Naive thymus-derived CD4-positive, alpha-beta T cell (primary cell): ENCODE measurements at regions of chr2 and their contacts with region 1.

Region 1: DNA sequence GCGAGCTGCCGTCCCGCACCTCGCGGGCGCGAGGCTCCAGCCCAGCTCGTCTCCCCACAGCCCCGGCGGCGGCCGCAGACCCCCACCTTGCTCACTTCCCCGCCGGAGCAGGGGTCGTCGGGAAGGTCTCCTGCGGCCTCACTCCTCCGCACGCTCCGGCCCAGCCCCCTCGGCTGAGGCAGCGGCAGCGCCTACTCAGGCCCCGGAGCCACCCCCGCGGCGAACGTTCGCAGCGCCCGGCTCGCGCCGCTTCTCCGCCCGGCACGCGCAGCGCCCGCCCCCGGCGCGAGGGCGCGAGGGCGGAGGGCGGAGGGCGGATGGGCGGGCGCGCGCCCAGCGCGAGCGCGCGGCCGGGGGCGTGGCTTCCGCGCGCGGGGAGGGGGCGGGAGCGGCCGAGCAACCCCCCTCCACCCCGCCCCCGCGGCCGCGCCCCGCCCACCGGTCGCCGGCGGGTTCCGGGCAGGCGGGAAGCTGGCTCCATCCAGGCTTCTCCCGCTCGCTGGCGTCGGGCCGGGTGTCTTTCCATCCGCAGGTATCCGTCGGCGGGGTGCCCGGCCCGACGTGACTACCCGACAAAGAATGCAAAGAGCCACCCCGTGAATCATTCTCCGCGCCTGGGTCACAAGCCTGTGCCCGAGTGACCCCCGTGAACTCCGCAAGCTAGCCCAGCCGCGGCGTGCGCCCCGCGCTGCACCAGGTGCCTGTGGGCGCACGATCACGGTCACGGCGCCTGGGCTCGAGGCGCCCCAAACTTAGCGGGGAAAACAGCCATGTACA is at the start of gene DTNB:
- DNase-seq: peak; percentile 68 to 82 (median 79)
- ATAC-seq: peak; percentile 89
- H3K4me3 ChIP-seq: peak within 1 kb of the TSS; percentile 94
- H3K4me3 Mint-ChIP-seq: peak within 1 kb of the TSS; percentile 84 to 90 (median 88)
- H3K27ac ChIP-seq: peak within 1 kb of the TSS; percentile 80
- H3K27ac Mint-ChIP-seq: peak within 1 kb of the TSS; percentile 74 to 92 (median 84)
- H3K4me1 ChIP-seq: peaks cover 12 to 15% of the 10 kb centered on the region in 2 donors
- H3K4me1 Mint-ChIP-seq: peaks cover 15 to 56% (median 37%) of the 10 kb centered on the region in 7 donors
- H3K27me3 ChIP-seq: no peaks in the 10 kb centered on the region
- H3K27me3 Mint-ChIP-seq: peaks cover 0 to 25% (median 0%) of the 10 kb centered on the region in 5 donors
- total RNA-seq, gene DTNB: 32.8 to 56.2 (median 33.8) TPM

Region 2: DNA sequence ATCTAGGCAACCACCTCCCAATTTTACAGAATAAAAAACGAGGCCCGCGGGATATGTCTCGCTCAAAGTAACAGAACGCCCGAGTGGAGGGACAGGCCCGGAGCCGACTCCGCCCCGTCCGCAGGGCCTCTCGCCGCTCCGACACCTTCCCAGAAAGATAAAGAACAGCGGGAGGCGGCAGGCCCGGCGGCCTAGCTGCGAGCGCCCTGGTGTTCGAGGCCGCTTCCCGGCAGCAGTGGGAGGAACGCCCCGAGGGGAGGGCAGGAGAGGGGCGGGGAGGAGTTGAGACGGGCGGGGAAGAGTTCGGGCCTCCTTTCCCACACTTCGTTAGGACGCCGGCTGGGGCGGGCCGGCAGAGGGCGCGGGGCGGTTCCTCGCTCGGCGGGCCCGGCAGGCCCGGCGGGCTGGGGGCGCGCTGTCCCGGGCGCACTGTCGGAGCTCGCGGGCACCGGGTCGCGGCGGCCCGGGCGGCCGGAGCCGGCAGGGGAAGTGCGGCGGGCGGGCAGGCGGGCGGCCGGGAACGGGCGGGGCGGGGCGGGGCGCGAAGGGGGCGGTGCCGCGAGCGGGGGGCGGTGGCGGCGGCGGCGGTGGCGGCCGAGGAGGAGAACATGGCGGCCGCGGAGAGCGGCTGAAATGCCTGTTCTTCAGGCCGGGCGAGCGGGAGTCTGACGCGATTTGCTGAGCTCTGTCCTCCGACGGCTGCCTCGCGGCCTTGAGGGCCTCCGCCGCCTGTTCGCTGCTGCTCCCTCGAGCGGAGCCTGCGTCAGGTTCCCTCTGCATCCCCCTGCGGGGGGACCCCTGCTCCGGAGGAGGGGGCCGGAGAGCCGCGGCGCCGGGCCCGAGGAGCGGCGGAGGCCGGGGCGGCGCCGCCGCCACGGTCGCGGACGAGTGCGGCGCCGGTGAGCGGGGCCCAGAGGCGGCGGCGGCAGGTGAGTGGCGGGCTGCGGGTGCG is 1182.5 kb before region 1 on chr2 and contains the start of gene NCOA1:
- CTCF ChIA-PET with region 1: no interaction called
- POLR2A ChIA-PET with region 1: no interaction called
- intact Hi-C with region 1: loop called in 1 of 2 experiments (anchors 2 kb)
- DNase-seq: peak; percentile 82 to 92 (median 90)
- ATAC-seq: peak; percentile 91
- H3K4me3 ChIP-seq: peak within 1 kb of the TSS; percentile 63
- H3K4me3 Mint-ChIP-seq: peak within 1 kb of the TSS; percentile 80 to 95 (median 90)
- H3K27ac ChIP-seq: peak within 1 kb of the TSS; percentile 93
- H3K27ac Mint-ChIP-seq: peak within 1 kb of the TSS; percentile 87 to 98 (median 93)
- H3K4me1 ChIP-seq: peaks cover 26 to 48% of the 10 kb centered on the region in 2 donors
- H3K4me1 Mint-ChIP-seq: peaks cover 46 to 62% (median 59%) of the 10 kb centered on the region in 7 donors
- H3K27me3 ChIP-seq: no peaks in the 10 kb centered on the region
- H3K27me3 Mint-ChIP-seq: peaks cover 0 to 11% (median 0%) of the 10 kb centered on the region in 5 donors
- total RNA-seq, gene NCOA1: 20.9 to 72.8 (median 46.6) TPM

Region 3: DNA sequence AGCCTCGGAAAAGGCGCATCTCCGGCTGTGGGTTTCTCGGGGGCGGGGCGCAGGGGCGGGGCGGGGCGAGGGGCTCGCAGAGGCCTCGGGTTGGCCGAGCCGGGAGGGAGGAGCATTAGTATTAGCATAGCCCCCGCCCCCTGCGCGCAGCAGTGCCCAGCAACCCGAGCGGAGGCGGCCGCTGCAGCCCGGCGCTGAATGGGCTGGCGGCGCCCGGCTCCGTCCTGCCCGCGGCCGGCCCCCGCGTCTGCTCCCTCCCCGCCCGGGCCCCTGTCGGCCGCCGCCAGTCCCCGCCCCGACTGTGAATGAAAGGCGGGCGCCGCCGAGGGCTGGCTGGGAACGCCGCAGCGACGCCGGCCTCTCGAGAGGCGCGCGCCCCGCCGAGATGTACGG is 631.6 kb before region 1 on chr2 and contains the start of gene EFR3B:
- CTCF ChIA-PET with region 1: no interaction called
- POLR2A ChIA-PET with region 1: no interaction called
- intact Hi-C with region 1: loop called in 1 of 2 experiments (anchors 5 kb)
- DNase-seq: peak; percentile 77 to 88 (median 86)
- ATAC-seq: peak; percentile 99
- H3K4me3 ChIP-seq: peak within 1 kb of the TSS; percentile 73
- H3K4me3 Mint-ChIP-seq: peak within 1 kb of the TSS; percentile 79 to 91 (median 89)
- H3K27ac ChIP-seq: peak within 1 kb of the TSS; percentile 18
- H3K27ac Mint-ChIP-seq: peak within 1 kb of the TSS in 6 of 9 donors; percentile 8 to 88 (median 54)
- H3K4me1 ChIP-seq: peaks cover 13 to 17% of the 10 kb centered on the region in 2 donors
- H3K4me1 Mint-ChIP-seq: peaks cover 18 to 30% (median 20%) of the 10 kb centered on the region in 7 donors
- H3K27me3 ChIP-seq: peaks cover 7 to 8% of the 10 kb centered on the region in 2 donors
- H3K27me3 Mint-ChIP-seq: peaks cover 34 to 59% (median 37%) of the 10 kb centered on the region in 5 donors
- total RNA-seq, gene EFR3B: 0.05 to 0.08 (median 0.07) TPM in 3 of 5 experiments, not detected in the others

Region 4: DNA sequence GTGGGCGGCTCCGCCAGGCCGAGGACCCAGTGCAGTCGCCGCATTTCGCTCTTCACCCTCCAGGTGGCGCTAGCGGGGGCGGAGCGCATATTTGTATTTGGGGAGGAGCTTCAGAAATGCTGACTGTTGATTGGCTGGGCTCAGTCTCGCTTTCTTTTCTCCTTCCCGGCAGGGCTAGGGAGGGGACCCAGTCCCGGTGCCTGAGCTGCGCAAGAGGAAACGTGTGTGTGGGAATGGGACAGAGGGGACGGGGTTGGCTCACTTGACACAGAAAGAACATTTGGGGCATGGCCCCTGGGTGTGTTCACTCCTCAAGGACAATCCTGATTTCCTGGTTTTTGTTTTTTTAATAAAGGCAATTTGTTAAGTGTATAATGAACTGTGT is 311.4 kb before region 1 on chr2:
- CTCF ChIA-PET with region 1: no interaction called
- POLR2A ChIA-PET with region 1: no interaction called
- intact Hi-C with region 1: loop called in 1 of 2 experiments (anchors 1 kb)
- DNase-seq: peak; percentile 86 to 99 (median 93)
- ATAC-seq: peak; percentile 98
- H3K4me3 ChIP-seq: peak overlapping the region; percentile 78
- H3K4me3 Mint-ChIP-seq: peak overlapping the region; percentile 83 to 95 (median 89)
- H3K27ac ChIP-seq: peak overlapping the region; percentile 81
- H3K27ac Mint-ChIP-seq: peak overlapping the region; percentile 84 to 96 (median 92)
- H3K4me1 ChIP-seq: peaks cover 3 to 4% of the 10 kb centered on the region in 2 donors
- H3K4me1 Mint-ChIP-seq: peaks cover 11 to 32% (median 25%) of the 10 kb centered on the region in 7 donors
- H3K27me3 ChIP-seq: no peaks in the 10 kb centered on the region
- H3K27me3 Mint-ChIP-seq: no peaks in the 10 kb centered on the region

Region 5: DNA sequence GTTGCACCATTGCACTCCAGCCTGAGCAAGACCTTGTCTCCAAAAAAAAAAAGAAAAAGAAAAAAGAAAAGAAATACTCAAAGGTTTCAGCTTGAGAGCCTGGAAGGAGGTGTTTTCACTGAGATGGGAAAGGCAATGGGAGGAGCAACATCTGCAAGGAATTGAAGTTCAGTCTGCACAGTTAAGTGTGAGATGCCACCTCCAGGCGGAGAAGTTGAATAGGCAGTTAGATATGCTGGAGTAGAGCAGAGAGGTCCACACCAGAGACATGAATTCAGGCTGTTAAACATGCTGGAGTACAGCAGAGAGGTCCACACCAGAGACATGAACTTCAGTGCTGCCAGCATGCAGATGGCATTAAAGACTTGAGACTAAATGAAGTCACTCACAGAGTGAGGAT is 41.3 kb after region 1 on chr2:
- CTCF ChIA-PET with region 1: no interaction called
- POLR2A ChIA-PET with region 1: no interaction called
- intact Hi-C with region 1: no loop called
- DNase-seq: no peak
- ATAC-seq: no peak
- H3K4me3 ChIP-seq: no peak overlapping the region
- H3K4me3 Mint-ChIP-seq: no peak overlapping the region
- H3K27ac ChIP-seq: no peak overlapping the region
- H3K27ac Mint-ChIP-seq: no peak overlapping the region
- H3K4me1 ChIP-seq: no peaks in the 10 kb centered on the region
- H3K4me1 Mint-ChIP-seq: peaks cover 8 to 23% (median 18%) of the 10 kb centered on the region in 7 donors
- H3K27me3 ChIP-seq: no peaks in the 10 kb centered on the region
- H3K27me3 Mint-ChIP-seq: peaks cover 9 to 20% (median 12%) of the 10 kb centered on the region in 5 donors

Region 6: DNA sequence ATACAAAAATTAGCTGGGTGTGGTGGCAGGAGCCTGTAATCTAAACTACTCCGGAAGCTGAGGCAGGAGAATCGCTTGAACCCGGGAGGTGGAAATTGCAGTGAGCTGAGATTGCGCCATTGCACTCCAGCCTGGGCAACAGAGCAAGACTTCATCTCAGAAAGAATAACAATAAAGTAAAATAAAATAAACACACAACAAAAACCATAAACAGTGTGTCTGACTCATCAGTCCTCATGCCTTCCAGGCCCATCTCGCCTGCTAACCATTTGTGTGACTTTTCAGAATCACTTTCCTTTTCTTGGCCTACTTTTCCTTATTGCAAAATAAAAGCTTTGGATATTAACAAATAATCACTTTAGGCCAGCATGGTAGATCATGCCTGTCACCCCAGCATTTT is 246.8 kb after region 1 on chr2:
- CTCF ChIA-PET with region 1: no interaction called
- POLR2A ChIA-PET with region 1: no interaction called
- intact Hi-C with region 1: no loop called
- DNase-seq: no peak
- ATAC-seq: no peak
- H3K4me3 ChIP-seq: no peak overlapping the region
- H3K4me3 Mint-ChIP-seq: no peak overlapping the region
- H3K27ac ChIP-seq: no peak overlapping the region
- H3K27ac Mint-ChIP-seq: no peak overlapping the region
- H3K4me1 ChIP-seq: no peaks in the 10 kb centered on the region
- H3K4me1 Mint-ChIP-seq: peaks cover 6 to 12% (median 10%) of the 10 kb centered on the region in 7 donors
- H3K27me3 ChIP-seq: no peaks in the 10 kb centered on the region
- H3K27me3 Mint-ChIP-seq: peaks cover 0 to 7% (median 0%) of the 10 kb centered on the region in 5 donors

Region 7: DNA sequence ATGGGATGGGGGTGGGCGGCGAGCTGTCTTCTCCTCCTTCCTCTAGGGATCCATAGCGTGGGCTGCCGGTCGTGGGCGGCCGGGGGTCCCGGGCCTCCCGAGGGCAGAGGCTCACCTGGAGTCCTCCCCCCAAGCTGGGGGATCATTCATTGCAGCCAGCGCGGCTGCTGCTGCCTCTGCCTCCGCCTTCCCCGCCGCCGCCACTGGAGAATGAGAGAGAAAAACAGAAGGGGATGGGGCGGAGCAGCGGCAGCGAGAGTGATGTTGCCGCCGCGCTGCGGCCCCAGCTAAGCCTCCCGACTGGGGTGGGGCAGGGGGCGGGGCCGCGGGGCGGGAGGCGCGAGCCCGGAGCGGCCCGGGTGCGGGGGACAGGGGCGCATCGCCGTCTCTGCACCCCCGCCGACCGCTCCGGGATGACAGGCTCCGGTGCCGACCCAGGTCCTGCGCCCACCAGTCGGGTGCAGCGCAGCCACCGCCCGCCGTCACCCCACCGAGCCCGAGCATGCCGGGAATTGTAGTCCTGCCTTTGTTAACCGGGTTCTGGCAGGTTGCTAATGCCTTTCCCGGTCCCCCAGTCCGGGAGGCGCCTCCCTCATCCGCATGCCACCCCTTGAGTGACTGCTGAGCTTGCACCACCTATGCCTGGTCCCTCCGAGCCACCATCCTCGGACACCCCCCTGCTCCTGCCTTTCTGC is 308.9 kb after region 1 on chr2 and contains the start of gene KIF3C:
- CTCF ChIA-PET with region 1: no interaction called
- POLR2A ChIA-PET with region 1: no interaction called
- intact Hi-C with region 1: loop called in 1 of 2 experiments (anchors 1 kb)
- DNase-seq: peak; percentile 59 to 76 (median 73)
- ATAC-seq: peak; percentile 93
- H3K4me3 ChIP-seq: peak within 1 kb of the TSS; percentile 64
- H3K4me3 Mint-ChIP-seq: peak within 1 kb of the TSS; percentile 83 to 94 (median 87)
- H3K27ac ChIP-seq: peak within 1 kb of the TSS; percentile 62
- H3K27ac Mint-ChIP-seq: peak within 1 kb of the TSS; percentile 28 to 89 (median 81)
- H3K4me1 ChIP-seq: peaks cover 0 to 5% of the 10 kb centered on the region in 2 donors
- H3K4me1 Mint-ChIP-seq: peaks cover 12 to 24% (median 16%) of the 10 kb centered on the region in 7 donors
- H3K27me3 ChIP-seq: no peaks in the 10 kb centered on the region
- H3K27me3 Mint-ChIP-seq: no peaks in the 10 kb centered on the region
- total RNA-seq, gene KIF3C: 2.9 to 6.3 (median 5.7) TPM

Region 8: DNA sequence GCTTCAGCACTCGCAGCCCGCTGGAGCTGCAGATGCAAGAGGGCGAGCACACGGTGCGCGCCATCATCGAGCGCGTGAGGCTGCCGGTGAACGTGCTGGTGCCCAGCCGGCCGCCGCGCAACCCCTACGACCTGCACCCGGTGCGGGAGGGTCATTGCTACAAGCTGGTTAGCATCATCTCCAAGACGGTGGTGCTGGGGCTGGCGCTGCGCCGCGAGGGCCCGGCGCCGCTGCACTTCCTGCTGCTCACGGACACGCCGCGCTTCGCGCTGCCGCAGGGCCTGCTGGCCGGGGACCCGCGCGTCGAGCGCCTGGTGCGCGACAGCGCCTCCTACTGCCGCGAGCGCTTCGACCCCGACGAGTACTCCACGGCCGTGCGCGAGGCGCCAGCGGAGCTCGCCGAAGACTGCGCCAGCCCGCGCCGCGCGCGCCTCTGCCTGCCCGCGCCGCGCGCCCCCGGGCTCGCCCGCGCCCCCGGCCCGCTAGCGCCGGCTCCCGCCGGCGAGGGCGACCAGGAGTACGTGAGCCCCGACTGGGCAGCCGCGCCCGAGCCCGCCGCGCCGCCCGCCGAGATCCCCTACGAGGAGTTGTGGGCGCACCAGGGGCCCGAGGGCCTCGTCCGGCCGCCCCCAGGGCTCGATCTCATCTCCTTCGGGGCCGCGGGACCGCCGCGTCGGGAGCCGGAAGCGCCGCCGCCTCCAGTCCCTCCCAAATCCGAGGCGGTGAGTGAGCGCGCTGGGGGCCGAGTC is 511.2 kb after region 1 on chr2:
- CTCF ChIA-PET with region 1: interaction called, 3 read pairs
- POLR2A ChIA-PET with region 1: interaction called, 3 read pairs
- intact Hi-C with region 1: loop called in 1 of 2 experiments (anchors 1 kb)
- DNase-seq: peak; percentile 82 to 91 (median 88)
- ATAC-seq: peak; percentile 98
- H3K4me3 ChIP-seq: peak overlapping the region; percentile 68
- H3K4me3 Mint-ChIP-seq: peak overlapping the region; percentile 79 to 91 (median 85)
- H3K27ac ChIP-seq: peak overlapping the region; percentile 71
- H3K27ac Mint-ChIP-seq: peak overlapping the region in 7 of 9 donors; percentile 25 to 90 (median 67)
- H3K4me1 ChIP-seq: peaks cover 5 to 8% of the 10 kb centered on the region in 2 donors
- H3K4me1 Mint-ChIP-seq: peaks cover 6 to 30% (median 23%) of the 10 kb centered on the region in 7 donors
- H3K27me3 ChIP-seq: no peaks in the 10 kb centered on the region
- H3K27me3 Mint-ChIP-seq: peaks cover 11 to 23% (median 15%) of the 10 kb centered on the region in 5 donors